CD4-positive, alpha-beta memory T cell (primary cell): ENCODE measurements at regions of chr6 and their contacts with region 1.

Region 1: DNA sequence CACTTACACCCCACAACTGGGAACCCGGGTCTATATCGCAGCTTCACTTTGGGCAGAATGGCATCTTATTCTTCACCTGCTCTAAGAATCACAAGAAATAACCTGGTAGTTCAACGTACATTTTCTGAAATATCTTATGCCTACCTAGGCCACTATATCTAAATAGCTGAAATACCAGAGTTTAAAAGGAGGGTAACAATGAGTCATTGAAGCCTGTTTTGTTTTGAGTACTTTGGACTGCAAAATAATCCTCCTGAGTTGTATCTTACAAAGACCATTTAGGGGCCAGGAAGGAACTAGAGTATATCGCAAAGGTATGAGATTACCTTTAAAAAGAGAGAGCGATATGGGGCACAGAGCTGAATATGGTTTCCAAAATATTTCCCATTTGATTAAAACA is 96.7 kb upstream of the NUP153 start:
- DNase-seq: no peak
- H3K4me3 ChIP-seq: no peak overlapping the region
- H3K4me3 Mint-ChIP-seq: no peak overlapping the region
- H3K27ac ChIP-seq: no peak overlapping the region
- H3K27ac Mint-ChIP-seq: no peak overlapping the region
- H3K4me1 ChIP-seq: no peaks in the 10 kb centered on the region
- H3K4me1 Mint-ChIP-seq: peaks cover 0 to 3% (median 0%) of the 10 kb centered on the region in 4 donors
- H3K27me3 ChIP-seq: no peaks in the 10 kb centered on the region
- H3K27me3 Mint-ChIP-seq: peaks cover 5 to 11% of the 10 kb centered on the region in 2 donors

Region 2: DNA sequence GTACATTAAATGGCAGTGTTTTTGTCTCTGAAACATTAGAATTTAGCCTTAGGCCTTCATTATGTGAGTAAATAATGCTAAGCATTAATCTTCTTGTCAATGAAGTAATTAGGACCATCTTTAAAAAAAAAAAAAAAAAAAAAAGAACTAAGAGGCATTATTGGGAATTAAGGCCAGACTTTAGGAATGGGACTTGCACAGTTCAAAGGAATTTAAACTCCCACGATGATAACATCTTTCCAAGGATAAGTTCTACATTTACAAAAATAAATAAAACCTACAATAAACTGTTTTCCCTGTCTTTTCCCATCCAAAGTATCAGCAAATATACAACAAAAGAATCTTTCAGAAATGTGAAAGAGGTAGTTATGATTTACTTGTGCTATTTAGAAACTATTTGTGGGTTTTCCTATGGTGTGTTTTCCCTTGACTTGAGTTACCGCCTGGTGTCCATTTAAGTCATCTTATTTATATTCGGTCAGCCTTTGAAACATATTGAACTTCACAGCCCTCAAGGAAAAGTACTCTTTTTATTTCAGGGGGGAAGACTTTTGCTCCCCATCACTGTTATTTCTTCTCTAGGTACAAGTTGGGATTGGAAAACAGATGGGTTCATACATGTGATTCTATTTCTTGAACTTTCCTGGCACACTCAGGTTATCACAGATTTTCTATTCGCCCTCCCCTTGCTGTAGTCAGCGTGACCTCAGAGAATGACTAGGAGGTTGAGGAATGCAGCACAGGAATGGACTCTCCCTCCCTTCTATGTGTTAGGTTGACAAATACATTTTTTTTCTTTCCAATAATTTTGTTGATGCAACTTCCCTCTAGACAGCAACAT is 687.9 kb before region 1 on chr6:
- CTCF ChIA-PET with region 1: no interaction called
- POLR2A ChIA-PET with region 1: no interaction called
- intact Hi-C with region 1: no loop called
- DNase-seq: no peak
- H3K4me3 ChIP-seq: no peak overlapping the region
- H3K4me3 Mint-ChIP-seq: no peak overlapping the region
- H3K27ac ChIP-seq: no peak overlapping the region
- H3K27ac Mint-ChIP-seq: no peak overlapping the region
- H3K4me1 ChIP-seq: no peaks in the 10 kb centered on the region
- H3K4me1 Mint-ChIP-seq: no peaks in the 10 kb centered on the region
- H3K27me3 ChIP-seq: no peaks in the 10 kb centered on the region
- H3K27me3 Mint-ChIP-seq: peaks cover 8 to 11% of the 10 kb centered on the region in 2 donors

Region 3: DNA sequence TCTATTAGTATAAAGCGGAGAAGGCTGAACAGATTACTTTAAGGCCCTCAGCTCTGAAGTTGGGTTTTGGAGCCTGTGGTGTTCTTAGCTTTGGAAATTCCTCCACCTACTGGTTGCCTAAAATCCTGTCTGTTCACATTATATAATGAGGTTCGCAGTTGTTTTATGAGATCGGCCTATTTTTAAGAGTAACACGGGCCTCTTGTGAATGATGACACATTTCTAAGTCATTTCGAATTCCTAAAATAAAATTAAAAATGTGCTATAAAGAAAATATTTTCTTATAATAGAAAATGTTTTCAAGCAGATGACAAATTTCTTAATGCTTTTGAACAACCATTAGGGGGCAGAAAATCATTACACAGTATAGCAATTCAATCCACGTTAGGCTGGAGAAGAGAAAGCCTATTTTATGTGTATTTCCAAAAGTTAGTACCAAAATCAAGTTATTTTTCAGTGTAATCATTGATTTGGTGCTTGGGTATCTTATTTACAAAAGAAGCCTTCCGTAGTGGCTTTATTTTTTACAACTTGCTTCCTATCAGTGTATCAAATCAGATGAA is 219.1 kb before region 1 on chr6:
- CTCF ChIA-PET with region 1: interaction called, 72 read pairs
- POLR2A ChIA-PET with region 1: no interaction called
- intact Hi-C with region 1: loop called (anchors 1 kb)
- DNase-seq: peak in 4 of 5 donors; percentile 45 to 52 (median 47)
- H3K4me3 ChIP-seq: no peak overlapping the region
- H3K4me3 Mint-ChIP-seq: peak overlapping the region in 2 of 8 donors; percentile 1 to 3
- H3K27ac ChIP-seq: no peak overlapping the region
- H3K27ac Mint-ChIP-seq: peak overlapping the region in 3 of 7 donors; percentile 0 to 58 (median 2)
- H3K4me1 ChIP-seq: peaks cover 2% of the 10 kb centered on the region
- H3K4me1 Mint-ChIP-seq: peaks cover 2 to 4% (median 3%) of the 10 kb centered on the region in 4 donors
- H3K27me3 ChIP-seq: no peaks in the 10 kb centered on the region
- H3K27me3 Mint-ChIP-seq: peaks cover 5 to 10% of the 10 kb centered on the region in 2 donors

Region 4: DNA sequence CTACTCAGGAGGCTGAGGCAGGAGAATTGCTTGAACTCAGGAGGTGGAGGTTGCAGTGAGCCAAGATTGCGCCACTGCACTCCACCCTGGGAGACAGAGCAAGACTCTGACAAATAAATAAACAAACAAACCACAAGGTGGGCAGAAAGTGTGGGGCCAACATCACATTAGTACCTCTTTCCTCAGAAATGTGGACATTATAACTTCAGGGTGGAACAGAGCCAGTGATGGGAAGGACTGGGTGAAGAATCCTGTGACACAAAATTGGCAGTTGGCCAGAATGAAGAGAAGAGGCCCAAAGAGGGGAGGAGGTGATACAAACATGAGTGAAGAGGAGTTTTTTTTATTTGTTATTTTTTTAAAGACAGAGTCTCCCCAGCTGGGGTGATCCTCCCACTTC is 147.3 kb before region 1 on chr6:
- CTCF ChIA-PET with region 1: interaction called, 12 read pairs
- POLR2A ChIA-PET with region 1: no interaction called
- intact Hi-C with region 1: no loop called
- DNase-seq: no peak
- H3K4me3 ChIP-seq: no peak overlapping the region
- H3K4me3 Mint-ChIP-seq: no peak overlapping the region
- H3K27ac ChIP-seq: no peak overlapping the region
- H3K27ac Mint-ChIP-seq: peak overlapping the region in 3 of 7 donors; percentile 55 to 89 (median 72)
- H3K4me1 ChIP-seq: peaks cover 4% of the 10 kb centered on the region
- H3K4me1 Mint-ChIP-seq: peaks cover 4 to 21% (median 8%) of the 10 kb centered on the region in 4 donors
- H3K27me3 ChIP-seq: no peaks in the 10 kb centered on the region
- H3K27me3 Mint-ChIP-seq: no peaks in the 10 kb centered on the region

Region 5: DNA sequence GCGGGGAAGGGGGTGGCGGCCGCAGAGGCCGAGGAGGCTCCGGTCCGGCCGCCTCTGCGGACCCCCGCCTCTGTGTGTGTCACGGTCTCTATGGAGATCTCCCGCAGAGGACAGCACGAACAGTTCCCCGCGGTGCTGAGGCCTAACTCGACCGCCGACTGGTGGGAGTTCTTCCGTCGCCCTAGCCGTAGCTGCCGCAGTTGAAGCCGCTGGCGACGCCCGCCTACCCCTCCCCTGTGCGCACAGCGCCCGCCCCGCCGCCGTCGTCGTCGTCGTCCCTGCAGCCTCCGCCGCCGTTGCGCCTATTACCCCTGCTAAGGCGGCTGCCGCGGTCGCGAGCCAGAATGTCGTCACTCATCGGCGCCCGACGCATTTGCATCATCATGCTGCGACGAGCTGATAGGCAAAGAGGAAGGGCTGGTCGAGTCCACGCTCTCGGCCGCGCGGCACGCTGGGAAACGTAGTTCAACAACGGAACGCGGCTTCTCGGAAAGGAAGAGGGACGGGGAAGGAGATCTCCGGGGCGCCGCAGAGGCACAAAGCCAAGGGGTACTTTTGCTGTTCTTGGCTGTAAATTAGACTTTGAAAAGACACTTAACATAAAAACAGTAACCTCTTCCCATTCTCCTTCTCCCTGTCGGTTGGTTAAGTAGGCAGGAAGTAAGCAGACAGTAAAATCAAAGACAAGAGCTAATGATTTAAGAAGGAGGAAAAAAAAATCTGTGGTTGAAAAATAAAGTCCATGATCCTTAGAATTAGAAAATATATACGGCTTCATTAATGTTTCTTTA is 96.6 kb before region 1 on chr6 and contains the start of gene NUP153:
- CTCF ChIA-PET with region 1: interaction called, 68 read pairs
- POLR2A ChIA-PET with region 1: interaction called, 3 read pairs
- intact Hi-C with region 1: loop called (anchors 1 kb)
- DNase-seq: peak; percentile 99 to 100 (median 99)
- H3K4me3 ChIP-seq: peak within 1 kb of the TSS; percentile 74 to 87
- H3K4me3 Mint-ChIP-seq: peak within 1 kb of the TSS; percentile 86 to 96 (median 93)
- H3K27ac ChIP-seq: peak within 1 kb of the TSS; percentile 99
- H3K27ac Mint-ChIP-seq: peak within 1 kb of the TSS; percentile 93 to 99 (median 97)
- H3K4me1 ChIP-seq: peaks cover 42% of the 10 kb centered on the region
- H3K4me1 Mint-ChIP-seq: peaks cover 22 to 52% (median 35%) of the 10 kb centered on the region in 4 donors
- H3K27me3 ChIP-seq: no peaks in the 10 kb centered on the region
- H3K27me3 Mint-ChIP-seq: no peaks in the 10 kb centered on the region
- total RNA-seq, gene NUP153: 57.0 to 60.7 TPM

Region 6: DNA sequence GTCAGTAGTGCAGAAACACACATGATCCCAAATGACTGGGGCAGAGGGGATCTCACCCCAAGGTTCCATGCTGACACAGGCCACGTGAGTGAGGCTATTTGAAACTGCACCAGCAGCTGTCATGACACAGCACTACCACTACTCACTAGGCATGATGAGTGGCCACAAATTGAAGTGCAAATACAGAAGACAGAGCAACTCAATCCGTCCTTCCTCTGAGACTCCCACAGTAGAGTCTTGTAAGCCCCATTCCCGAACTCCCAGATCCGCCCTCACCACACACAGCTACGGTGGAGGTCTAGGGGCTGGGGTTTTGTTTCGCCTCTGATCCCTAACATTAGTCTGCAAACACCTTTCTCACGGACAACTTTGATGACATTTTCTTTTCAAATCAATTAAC is 16.6 kb after region 1 on chr6:
- CTCF ChIA-PET with region 1: interaction called, 80 read pairs
- POLR2A ChIA-PET with region 1: no interaction called
- intact Hi-C with region 1: no loop called
- DNase-seq: no peak
- H3K4me3 ChIP-seq: no peak overlapping the region
- H3K4me3 Mint-ChIP-seq: no peak overlapping the region
- H3K27ac ChIP-seq: no peak overlapping the region
- H3K27ac Mint-ChIP-seq: no peak overlapping the region
- H3K4me1 ChIP-seq: no peaks in the 10 kb centered on the region
- H3K4me1 Mint-ChIP-seq: no peaks in the 10 kb centered on the region
- H3K27me3 ChIP-seq: no peaks in the 10 kb centered on the region
- H3K27me3 Mint-ChIP-seq: peaks cover 4 to 6% of the 10 kb centered on the region in 2 donors

Region 7: GRCh38 chr6:17839528-17840223 is 36.3 kb after region 1 on chr6:
- CTCF ChIA-PET with region 1: no interaction called
- POLR2A ChIA-PET with region 1: no interaction called
- intact Hi-C with region 1: no loop called
- DNase-seq: no peak
- H3K4me3 ChIP-seq: no peak overlapping the region
- H3K4me3 Mint-ChIP-seq: no peak overlapping the region
- H3K27ac ChIP-seq: no peak overlapping the region
- H3K27ac Mint-ChIP-seq: peak overlapping the region in 1 of 7 donors; percentile 11
- H3K4me1 ChIP-seq: no peaks in the 10 kb centered on the region
- H3K4me1 Mint-ChIP-seq: peaks cover 0 to 3% (median 0%) of the 10 kb centered on the region in 4 donors
- H3K27me3 ChIP-seq: no peaks in the 10 kb centered on the region
- H3K27me3 Mint-ChIP-seq: peaks cover 8 to 9% of the 10 kb centered on the region in 2 donors

Region 8: DNA sequence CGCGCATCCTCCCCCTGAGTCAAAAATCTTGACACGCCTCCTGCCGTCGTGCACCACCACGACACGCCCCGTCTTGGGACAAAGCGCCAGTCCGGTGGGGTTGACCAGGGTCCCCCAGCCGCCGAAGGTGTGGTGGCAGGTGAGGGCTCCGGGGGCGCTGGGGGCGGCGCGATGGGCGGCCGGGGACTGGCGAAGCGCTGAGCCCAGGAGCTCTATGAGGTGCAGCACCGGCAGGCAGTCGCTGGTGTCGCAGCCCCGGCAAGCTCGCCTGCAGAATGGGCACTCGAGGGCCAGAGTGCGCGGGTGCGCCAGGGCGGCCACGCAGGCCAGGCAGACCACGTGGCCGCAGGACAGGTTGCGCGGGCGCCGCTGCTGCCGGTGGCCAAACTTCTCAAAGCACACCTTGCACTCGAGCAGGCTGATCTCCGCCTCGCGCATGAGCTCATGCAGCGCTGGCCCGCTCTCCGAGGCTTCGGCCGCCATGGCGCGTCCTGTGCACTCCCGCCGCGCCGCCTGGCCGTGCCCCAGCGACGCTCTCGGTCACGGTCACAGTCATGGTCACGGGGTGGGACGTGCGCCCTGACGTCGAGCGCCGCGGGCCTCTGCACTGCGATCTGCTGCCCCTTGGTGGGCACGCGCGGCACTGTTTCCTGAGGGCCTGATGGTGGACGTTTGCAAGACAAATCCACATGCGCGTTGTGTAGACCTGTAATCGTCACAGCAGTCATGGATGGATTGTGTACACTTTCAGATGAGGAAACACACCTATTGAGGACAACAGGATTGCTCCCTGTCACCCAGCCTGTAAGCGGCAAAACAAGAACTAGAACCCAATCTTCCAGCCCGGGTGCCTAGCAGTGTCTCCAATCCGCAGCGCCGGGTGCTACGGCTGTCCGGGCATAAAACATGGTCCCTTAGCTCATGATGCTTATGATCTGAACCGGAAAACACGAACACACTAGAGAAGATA is 319.0 kb after region 1 on chr6 and contains the start of gene NHLRC1:
- CTCF ChIA-PET with region 1: no interaction called
- POLR2A ChIA-PET with region 1: no interaction called
- intact Hi-C with region 1: no loop called
- DNase-seq: peak; percentile 44 to 69 (median 57)
- H3K4me3 ChIP-seq: peak within 1 kb of the TSS; percentile 26 to 37
- H3K4me3 Mint-ChIP-seq: peak within 1 kb of the TSS; percentile 75 to 91 (median 82)
- H3K27ac ChIP-seq: no peak within 1 kb of the TSS
- H3K27ac Mint-ChIP-seq: peak within 1 kb of the TSS in 4 of 7 donors; percentile 18 to 90 (median 31)
- H3K4me1 ChIP-seq: peaks cover 8% of the 10 kb centered on the region
- H3K4me1 Mint-ChIP-seq: peaks cover 5 to 17% (median 10%) of the 10 kb centered on the region in 4 donors
- H3K27me3 ChIP-seq: no peaks in the 10 kb centered on the region
- H3K27me3 Mint-ChIP-seq: peaks cover 1 to 9% of the 10 kb centered on the region in 2 donors
- total RNA-seq, gene NHLRC1: 1.1 TPM

Region 9: DNA sequence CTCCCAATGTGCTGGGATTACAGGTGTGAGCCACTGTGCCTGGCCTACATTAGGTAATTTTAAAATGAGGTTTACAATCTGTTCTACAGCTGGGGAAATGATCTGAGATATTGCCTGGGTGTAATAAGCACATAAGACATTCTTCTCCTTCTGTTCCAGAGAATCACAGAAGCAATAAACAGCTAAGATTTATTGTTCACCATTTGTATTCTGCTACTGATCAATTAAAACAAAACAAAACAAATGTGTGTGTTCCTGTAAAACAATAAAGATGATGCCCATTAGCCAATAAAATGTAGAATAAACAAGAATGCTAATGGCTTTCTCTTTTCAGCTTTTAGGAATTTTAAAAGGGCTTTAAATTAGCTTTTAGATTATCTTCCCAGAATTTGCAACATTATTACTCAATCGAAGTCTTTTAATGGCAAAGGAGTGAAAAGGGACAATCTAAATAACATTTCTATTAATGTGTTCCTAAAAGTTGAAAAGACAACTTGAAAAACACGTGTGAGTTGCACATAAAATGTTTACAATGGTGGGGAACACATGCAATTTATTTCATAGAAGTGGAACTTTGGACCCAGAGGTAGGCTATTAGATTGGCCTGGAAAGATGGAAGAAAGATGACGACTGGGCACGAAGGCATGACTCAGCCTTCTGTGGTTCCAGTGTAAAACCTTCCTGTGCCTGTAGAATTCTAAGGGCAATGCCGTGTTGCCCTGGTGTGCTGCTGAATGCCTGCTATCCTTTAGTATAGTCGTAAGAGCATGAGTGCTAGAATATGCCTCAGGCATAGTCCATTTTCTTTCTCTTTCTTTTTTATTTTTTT is 489.9 kb after region 1 on chr6:
- CTCF ChIA-PET with region 1: no interaction called
- POLR2A ChIA-PET with region 1: no interaction called
- intact Hi-C with region 1: no loop called
- DNase-seq: no peak
- H3K4me3 ChIP-seq: no peak overlapping the region
- H3K4me3 Mint-ChIP-seq: no peak overlapping the region
- H3K27ac ChIP-seq: no peak overlapping the region
- H3K27ac Mint-ChIP-seq: no peak overlapping the region
- H3K4me1 ChIP-seq: no peaks in the 10 kb centered on the region
- H3K4me1 Mint-ChIP-seq: no peaks in the 10 kb centered on the region
- H3K27me3 ChIP-seq: no peaks in the 10 kb centered on the region
- H3K27me3 Mint-ChIP-seq: peaks cover 2 to 5% of the 10 kb centered on the region in 2 donors